HepG2 (cell line): ENCODE measurements at regions of chr7 and their contacts with region 1.

Region 1: GRCh38 chr7:95476904-95477594 is 8.7 kb upstream of the ASB4 start:
- DNase-seq: peak; percentile 73
- ATAC-seq: no peak; the same call in 2 of the 3 replicates
- H3K4me3 ChIP-seq: no peak overlapping the region; a peak in 1 of 6 replicates
- H3K27ac ChIP-seq: no peak overlapping the region
- H3K4me1 ChIP-seq: peaks cover 43% of the 10 kb centered on the region
- H3K27me3 ChIP-seq: no peaks in the 10 kb centered on the region
- CTCF ChIP-seq: peak; percentile 83
- EP300 ChIP-seq: no peak
- POLR2A ChIP-seq: no peak
- RAD21 ChIP-seq: peak; percentile 83

Region 2: DNA sequence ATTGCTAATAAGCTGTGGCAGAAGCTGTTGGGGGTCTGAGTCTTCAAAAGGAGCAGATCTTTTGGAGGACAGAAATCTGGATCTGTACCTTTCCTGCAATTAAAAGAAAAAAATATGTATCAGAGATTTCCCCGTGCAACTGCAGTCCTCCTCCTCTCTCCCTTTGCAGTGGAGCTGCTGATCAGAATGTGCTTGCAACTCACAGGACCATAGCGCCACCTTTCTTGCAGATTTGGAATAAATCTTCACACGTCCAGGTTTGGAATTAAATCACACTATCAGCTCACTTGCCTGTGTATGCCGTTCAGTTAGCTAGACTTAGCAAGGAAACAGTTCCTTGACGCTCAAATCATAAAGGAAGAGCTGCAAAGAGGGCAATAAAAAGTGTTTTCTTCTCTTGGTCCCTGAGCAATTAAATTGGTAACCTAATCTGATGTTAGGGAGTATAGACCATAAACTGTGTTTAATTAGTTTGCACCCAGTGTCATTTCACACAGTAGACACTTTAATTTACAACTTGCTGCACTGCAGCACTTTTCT is 230.1 kb before region 1 on chr7:
- CTCF ChIA-PET with region 1: no interaction called
- POLR2A ChIA-PET with region 1: no interaction called
- in situ Hi-C with region 1: no loop called
- intact Hi-C with region 1: loop called (anchors 5 kb)
- DNase-seq: peak; percentile 54
- ATAC-seq: peak; percentile 80
- H3K4me3 ChIP-seq: no peak overlapping the region
- H3K27ac ChIP-seq: no peak overlapping the region
- H3K4me1 ChIP-seq: no peaks in the 10 kb centered on the region
- H3K27me3 ChIP-seq: no peaks in the 10 kb centered on the region
- CTCF ChIP-seq: peak; percentile 74
- EP300 ChIP-seq: no peak
- POLR2A ChIP-seq: no peak
- RAD21 ChIP-seq: no peak

Region 3: GRCh38 chr7:95303038-95303905 is 173.8 kb before region 1 on chr7:
- CTCF ChIA-PET with region 1: no interaction called
- POLR2A ChIA-PET with region 1: no interaction called
- in situ Hi-C with region 1: no loop called
- intact Hi-C with region 1: no loop called
- DNase-seq: no peak
- ATAC-seq: peak; percentile 37; the same call in 2 of the 3 replicates
- H3K4me3 ChIP-seq: no peak overlapping the region
- H3K27ac ChIP-seq: no peak overlapping the region
- H3K4me1 ChIP-seq: no peaks in the 10 kb centered on the region
- H3K27me3 ChIP-seq: no peaks in the 10 kb centered on the region
- CTCF ChIP-seq: no peak
- EP300 ChIP-seq: no peak
- POLR2A ChIP-seq: no peak
- RAD21 ChIP-seq: no peak

Region 4: DNA sequence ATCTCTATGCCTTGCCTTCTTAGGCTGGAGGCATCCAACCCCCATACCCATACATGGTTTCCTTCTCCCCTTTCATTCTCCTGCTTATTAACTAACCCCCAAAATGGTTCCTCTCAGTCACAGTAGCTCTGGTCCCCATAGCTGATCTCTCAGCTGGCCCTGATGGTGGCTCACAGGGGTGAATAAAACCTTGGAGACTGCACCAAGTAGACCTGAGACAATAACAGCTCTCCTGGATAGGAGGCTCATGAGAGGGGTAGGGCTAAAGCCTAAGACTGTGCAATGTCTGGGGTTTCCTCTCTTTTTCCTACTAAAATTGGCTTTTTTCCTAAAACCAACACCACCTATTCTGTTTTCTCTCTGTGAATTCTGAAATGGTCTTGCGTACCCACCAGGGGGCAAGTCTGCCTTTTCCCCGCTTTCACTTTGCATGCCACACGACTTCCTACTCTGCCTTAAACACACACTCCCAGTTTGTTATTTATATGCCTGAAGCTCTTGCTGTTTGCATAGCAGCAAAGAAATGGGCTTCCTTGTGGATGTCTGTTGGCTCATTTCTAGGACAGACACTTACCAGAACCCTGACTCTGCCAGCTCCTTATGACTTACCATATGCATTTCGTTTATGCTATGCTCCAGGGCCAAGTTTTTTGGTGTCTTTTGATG is 134.3 kb before region 1 on chr7:
- CTCF ChIA-PET with region 1: interaction called, 21 read pairs
- POLR2A ChIA-PET with region 1: interaction called, 5 read pairs
- in situ Hi-C with region 1: loop called (anchors 5 kb)
- intact Hi-C with region 1: loop called (anchors 1 kb)
- DNase-seq: peak; percentile 53
- ATAC-seq: peak; percentile 93
- H3K4me3 ChIP-seq: peak overlapping the region in 1 of 3 experiments; percentile 22; a peak in 1 of 6 replicates
- H3K27ac ChIP-seq: no peak overlapping the region
- H3K4me1 ChIP-seq: peaks cover 13% of the 10 kb centered on the region
- H3K27me3 ChIP-seq: no peaks in the 10 kb centered on the region
- CTCF ChIP-seq: peak; percentile 56
- EP300 ChIP-seq: no peak
- POLR2A ChIP-seq: no peak
- RAD21 ChIP-seq: peak; percentile 60; the same call in 1 of the 2 replicates

Region 5: GRCh38 chr7:95357623-95358022 is 119.4 kb before region 1 on chr7:
- CTCF ChIA-PET with region 1: no interaction called
- POLR2A ChIA-PET with region 1: no interaction called
- in situ Hi-C with region 1: no loop called
- intact Hi-C with region 1: loop called (anchors 5 kb)
- DNase-seq: peak; percentile 4
- ATAC-seq: no peak
- H3K4me3 ChIP-seq: no peak overlapping the region
- H3K27ac ChIP-seq: no peak overlapping the region
- H3K4me1 ChIP-seq: no peaks in the 10 kb centered on the region
- H3K27me3 ChIP-seq: no peaks in the 10 kb centered on the region
- CTCF ChIP-seq: no peak
- EP300 ChIP-seq: no peak
- POLR2A ChIP-seq: no peak
- RAD21 ChIP-seq: no peak

Region 6: DNA sequence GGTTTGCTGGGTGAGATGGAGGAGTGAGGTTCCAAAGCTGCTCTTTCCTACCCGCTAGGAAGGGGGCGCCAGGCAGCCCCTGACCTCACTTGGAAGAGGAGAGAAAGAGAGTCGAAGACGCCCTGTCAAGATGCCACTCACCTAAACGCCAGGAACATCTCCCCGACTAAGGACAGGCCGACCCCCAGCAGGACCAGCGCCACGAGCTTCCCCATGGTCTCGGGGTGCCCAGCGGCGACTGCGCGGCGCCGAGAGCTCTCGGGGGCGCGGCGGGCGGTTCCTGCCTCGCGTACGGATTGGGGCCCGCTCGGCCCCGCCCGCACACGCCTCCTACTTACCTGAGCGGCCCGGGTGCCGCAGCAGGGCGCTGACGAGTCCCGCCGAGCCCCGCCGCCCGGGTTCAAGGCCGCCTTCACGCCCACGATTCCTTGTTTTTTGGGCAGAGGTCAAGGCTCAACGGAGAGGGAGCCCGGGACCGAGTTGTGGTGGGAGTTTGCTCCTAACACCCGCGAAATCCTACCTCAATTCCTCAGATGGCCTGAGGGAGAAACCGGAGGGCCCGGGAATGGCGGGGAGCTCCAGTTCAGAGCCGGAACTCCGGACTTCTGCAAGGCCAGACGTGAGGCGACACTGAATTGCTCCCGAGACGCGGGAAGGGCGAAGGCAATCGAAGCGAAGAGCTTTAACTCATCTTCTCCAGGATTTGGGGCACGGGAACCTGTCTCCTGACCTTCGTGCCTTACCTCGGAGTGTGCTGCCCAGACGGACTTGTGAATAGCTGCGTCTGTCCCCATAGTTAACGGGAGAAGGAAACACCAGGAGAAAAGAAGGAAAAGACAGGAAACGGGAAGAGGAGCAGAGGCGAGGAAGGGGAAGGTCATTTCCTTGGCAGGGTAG is 80.7 kb before region 1 on chr7 and contains the start of gene PON3:
- CTCF ChIA-PET with region 1: interaction called, 28 read pairs
- POLR2A ChIA-PET with region 1: interaction called, 38 read pairs
- in situ Hi-C with region 1: loop called (anchors 5 kb)
- intact Hi-C with region 1: loop called (anchors 1 kb)
- DNase-seq: peak; percentile 68
- ATAC-seq: peak; percentile 95
- H3K4me3 ChIP-seq: peak within 1 kb of the TSS; percentile 76 to 92 (median 91)
- H3K27ac ChIP-seq: peak within 1 kb of the TSS; percentile 76
- H3K4me1 ChIP-seq: peaks cover 32% of the 10 kb centered on the region
- H3K27me3 ChIP-seq: no peaks in the 10 kb centered on the region; a peak in 1 of 5 replicates
- CTCF ChIP-seq: peak; percentile 77
- EP300 ChIP-seq: no peak; a peak in 1 of 4 replicates
- POLR2A ChIP-seq: peak; percentile 43 to 70
- RAD21 ChIP-seq: peak; percentile 59
- total RNA-seq, gene PON3: 14.1 and 23.6 TPM in 2 replicates

Region 7: DNA sequence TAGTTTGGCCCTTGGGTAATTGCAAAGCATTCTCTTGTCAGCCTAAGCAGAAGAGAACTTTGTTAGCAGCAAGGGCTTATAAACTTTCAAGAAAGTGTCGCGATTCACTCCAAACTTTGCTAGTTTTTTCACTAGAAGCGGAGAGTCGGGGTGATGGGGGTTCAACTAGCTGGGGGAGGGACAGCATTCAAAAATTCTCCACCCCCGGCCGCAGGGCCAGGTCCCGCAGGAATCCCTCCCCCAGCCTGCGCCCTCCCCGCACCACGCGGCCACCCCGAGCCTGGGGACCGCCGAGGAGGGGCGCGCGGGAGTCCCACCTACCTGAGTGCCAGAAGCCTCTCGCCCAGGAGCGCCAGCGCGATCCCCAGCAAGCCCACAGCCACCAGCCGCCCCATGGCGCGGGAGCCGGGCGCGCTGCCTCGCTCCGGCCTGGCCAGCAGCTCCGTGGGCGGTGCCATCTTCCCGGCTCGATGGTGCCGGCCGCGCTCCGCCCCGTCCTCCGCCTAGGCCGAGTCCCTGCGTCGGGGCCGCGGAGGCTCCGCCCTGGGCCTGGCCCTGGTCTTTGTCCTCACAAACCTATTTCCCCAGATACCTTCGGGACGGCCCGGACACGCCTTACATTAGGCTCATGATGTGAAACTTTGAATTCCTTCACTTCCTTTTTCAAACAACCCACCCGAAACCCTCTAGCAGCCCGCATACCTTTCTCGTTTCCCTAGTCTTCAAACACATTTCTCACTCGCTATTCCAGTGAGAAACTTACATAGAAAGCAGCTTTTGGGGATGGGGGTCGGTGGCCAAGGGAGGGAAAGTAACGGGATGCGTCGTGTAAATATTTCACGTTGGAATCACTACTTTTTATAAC is 42.3 kb before region 1 on chr7 and contains the start of gene PON2:
- CTCF ChIA-PET with region 1: interaction called, 3 read pairs
- POLR2A ChIA-PET with region 1: interaction called, 18 read pairs
- in situ Hi-C with region 1: no loop called
- intact Hi-C with region 1: loop called (anchors 1 kb)
- DNase-seq: peak; percentile 90
- ATAC-seq: peak; percentile 98
- H3K4me3 ChIP-seq: peak within 1 kb of the TSS; percentile 61 to 91 (median 83)
- H3K27ac ChIP-seq: peak within 1 kb of the TSS; percentile 91
- H3K4me1 ChIP-seq: peaks cover 88% of the 10 kb centered on the region
- H3K27me3 ChIP-seq: no peaks in the 10 kb centered on the region
- CTCF ChIP-seq: peak; percentile 23; the same call in 1 of the 2 replicates
- EP300 ChIP-seq: no peak
- POLR2A ChIP-seq: peak; percentile 91 to 92
- RAD21 ChIP-seq: peak; percentile 54
- total RNA-seq, gene PON2: 110 and 202 TPM in 2 replicates

Region 8: DNA sequence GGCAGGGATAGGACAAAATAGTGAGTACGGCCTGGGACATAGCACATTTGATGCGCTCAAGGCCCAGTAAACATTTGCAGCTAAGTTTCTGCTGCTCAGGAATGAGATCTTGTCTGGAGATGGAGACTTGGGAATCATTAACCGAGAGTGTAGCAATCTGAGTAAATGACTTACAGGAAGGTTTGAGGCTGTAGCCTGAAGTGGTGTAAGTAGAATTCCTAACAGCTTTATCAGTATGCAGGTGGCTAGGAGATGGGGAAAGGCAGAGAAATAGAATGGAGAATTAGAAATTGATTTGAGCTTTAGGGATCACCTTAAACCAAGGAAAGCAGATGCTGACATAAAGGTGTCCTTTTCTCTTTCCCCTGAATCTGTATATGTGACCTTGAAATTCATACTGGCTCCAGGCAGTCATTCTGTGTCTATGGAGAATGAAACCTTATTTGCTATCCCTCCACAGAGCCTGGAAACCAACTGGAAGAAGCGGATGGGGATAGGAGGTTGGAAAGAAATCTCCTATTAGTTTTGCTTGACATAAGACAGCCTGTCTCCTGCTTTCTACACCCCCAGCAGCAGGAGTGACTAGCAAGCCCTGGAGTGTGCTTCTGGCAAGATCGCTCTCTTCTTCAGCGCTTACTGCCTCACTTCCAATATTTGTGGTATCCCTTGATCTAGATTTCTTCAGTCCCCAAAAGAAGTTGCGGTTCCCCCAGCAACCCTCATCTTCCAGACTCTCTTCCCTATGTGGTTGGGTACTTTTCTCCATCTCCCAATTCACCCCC is 35.8 kb before region 1 on chr7:
- CTCF ChIA-PET with region 1: interaction called, 3 read pairs
- POLR2A ChIA-PET with region 1: interaction called, 4 read pairs
- in situ Hi-C with region 1: loop called (anchors 5 kb)
- intact Hi-C with region 1: no loop called
- DNase-seq: peak; percentile 93
- ATAC-seq: peak; percentile 92
- H3K4me3 ChIP-seq: peak overlapping the region in 2 of 3 experiments; percentile 14 to 35; a peak in 2 of 6 replicates
- H3K27ac ChIP-seq: peak overlapping the region; percentile 74
- H3K4me1 ChIP-seq: peaks cover 89% of the 10 kb centered on the region
- H3K27me3 ChIP-seq: no peaks in the 10 kb centered on the region
- CTCF ChIP-seq: no peak
- EP300 ChIP-seq: peak in 1 of 2 experiments; percentile 81; a peak in 2 of 4 replicates
- POLR2A ChIP-seq: peak; percentile 53 to 57; a peak in 3 of 4 replicates
- RAD21 ChIP-seq: no peak

Region 9: GRCh38 chr7:95545078-95545498 is 68.0 kb after region 1 on chr7:
- CTCF ChIA-PET with region 1: no interaction called
- POLR2A ChIA-PET with region 1: no interaction called
- in situ Hi-C with region 1: no loop called
- intact Hi-C with region 1: no loop called
- DNase-seq: peak; percentile 24
- ATAC-seq: peak; percentile 85
- H3K4me3 ChIP-seq: no peak overlapping the region
- H3K27ac ChIP-seq: no peak overlapping the region
- H3K4me1 ChIP-seq: peaks cover 5% of the 10 kb centered on the region; the same call in 1 of the 2 replicates
- H3K27me3 ChIP-seq: no peaks in the 10 kb centered on the region
- CTCF ChIP-seq: peak; percentile 67
- EP300 ChIP-seq: no peak
- POLR2A ChIP-seq: no peak
- RAD21 ChIP-seq: peak; percentile 29; the same call in 1 of the 2 replicates

Region 10: GRCh38 chr7:95690367-95690947 is 213.4 kb after region 1 on chr7:
- CTCF ChIA-PET with region 1: no interaction called
- POLR2A ChIA-PET with region 1: no interaction called
- in situ Hi-C with region 1: no loop called
- intact Hi-C with region 1: no loop called
- DNase-seq: peak; percentile 47
- ATAC-seq: peak; percentile 83
- H3K4me3 ChIP-seq: no peak overlapping the region
- H3K27ac ChIP-seq: no peak overlapping the region
- H3K4me1 ChIP-seq: no peaks in the 10 kb centered on the region
- H3K27me3 ChIP-seq: no peaks in the 10 kb centered on the region
- CTCF ChIP-seq: peak; percentile 72
- EP300 ChIP-seq: no peak
- POLR2A ChIP-seq: no peak
- RAD21 ChIP-seq: peak; percentile 25; the same call in 1 of the 2 replicates